Naive thymus-derived CD4-positive, alpha-beta T cell (primary cell): ENCODE measurements at regions of chr4 and their contacts with region 1.

Region 1: GRCh38 chr4:102610007-102610406 is 108.8 kb downstream of the NFKB1 start:
- DNase-seq: no peak
- ATAC-seq: no peak
- H3K4me3 ChIP-seq: no peak overlapping the region
- H3K4me3 Mint-ChIP-seq: peak overlapping the region in 1 of 10 donors; percentile 5
- H3K27ac ChIP-seq: no peak overlapping the region
- H3K27ac Mint-ChIP-seq: peak overlapping the region; percentile 10 to 97 (median 76)
- H3K4me1 ChIP-seq: peaks cover 38% of the 10 kb centered on the region in 2 donors
- H3K4me1 Mint-ChIP-seq: peaks cover 30 to 85% (median 67%) of the 10 kb centered on the region in 7 donors
- H3K27me3 ChIP-seq: no peaks in the 10 kb centered on the region
- H3K27me3 Mint-ChIP-seq: no peaks in the 10 kb centered on the region

Region 2: GRCh38 chr4:102543030-102543928 is 66.7 kb before region 1 on chr4:
- CTCF ChIA-PET with region 1: no interaction called
- POLR2A ChIA-PET with region 1: no interaction called
- intact Hi-C with region 1: loop called in 1 of 2 experiments (anchors 2 kb)
- DNase-seq: no peak
- ATAC-seq: no peak
- H3K4me3 ChIP-seq: no peak overlapping the region
- H3K4me3 Mint-ChIP-seq: no peak overlapping the region
- H3K27ac ChIP-seq: no peak overlapping the region
- H3K27ac Mint-ChIP-seq: peak overlapping the region in 3 of 9 donors; percentile 46 to 75 (median 74)
- H3K4me1 ChIP-seq: peaks cover 0 to 4% of the 10 kb centered on the region in 2 donors
- H3K4me1 Mint-ChIP-seq: peaks cover 23 to 67% (median 54%) of the 10 kb centered on the region in 7 donors
- H3K27me3 ChIP-seq: no peaks in the 10 kb centered on the region
- H3K27me3 Mint-ChIP-seq: no peaks in the 10 kb centered on the region

Region 3: DNA sequence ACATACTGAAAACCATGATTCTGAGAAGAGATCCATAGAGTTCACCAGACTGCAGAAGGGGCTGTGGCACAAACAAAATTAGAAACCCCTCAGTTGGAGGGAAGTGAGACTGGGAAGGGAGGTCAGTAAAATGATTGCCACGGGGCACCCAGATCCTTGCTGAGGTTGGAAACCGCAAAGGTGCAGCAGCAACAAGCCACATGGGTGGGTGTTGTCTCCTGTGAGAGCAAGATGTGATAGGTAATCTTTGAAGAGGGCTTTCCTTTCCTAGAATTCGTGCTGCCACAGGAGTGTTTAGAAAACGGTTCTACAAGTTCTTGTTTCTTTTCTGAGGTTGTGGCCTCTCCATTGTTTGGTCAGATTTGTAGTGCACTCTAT is 23.4 kb before region 1 on chr4:
- CTCF ChIA-PET with region 1: interaction called, 3 read pairs
- POLR2A ChIA-PET with region 1: interaction called, 3 read pairs
- intact Hi-C with region 1: loop called in 1 of 2 experiments (anchors 2 kb)
- DNase-seq: peak in 7 of 9 donors; percentile 10 to 56 (median 37)
- ATAC-seq: peak; percentile 74
- H3K4me3 ChIP-seq: peak overlapping the region; percentile 3
- H3K4me3 Mint-ChIP-seq: peak overlapping the region; percentile 25 to 78 (median 62)
- H3K27ac ChIP-seq: peak overlapping the region; percentile 58
- H3K27ac Mint-ChIP-seq: peak overlapping the region; percentile 68 to 93 (median 84)
- H3K4me1 ChIP-seq: peaks cover 48 to 61% of the 10 kb centered on the region in 2 donors
- H3K4me1 Mint-ChIP-seq: peaks cover 39 to 91% (median 84%) of the 10 kb centered on the region in 7 donors
- H3K27me3 ChIP-seq: no peaks in the 10 kb centered on the region
- H3K27me3 Mint-ChIP-seq: no peaks in the 10 kb centered on the region

Region 4: GRCh38 chr4:102620697-102621497 is 10.9 kb after region 1 on chr4:
- CTCF ChIA-PET with region 1: interaction called, 10 read pairs
- POLR2A ChIA-PET with region 1: interaction called, 3 read pairs
- intact Hi-C with region 1: loop called in 1 of 2 experiments (anchors 1 kb)
- DNase-seq: peak in 2 of 9 donors; percentile 34 to 45
- ATAC-seq: peak; percentile 65
- H3K4me3 ChIP-seq: no peak overlapping the region
- H3K4me3 Mint-ChIP-seq: peak overlapping the region in 3 of 10 donors; percentile 9 to 42 (median 32)
- H3K27ac ChIP-seq: no peak overlapping the region
- H3K27ac Mint-ChIP-seq: peak overlapping the region in 7 of 9 donors; percentile 20 to 85 (median 59)
- H3K4me1 ChIP-seq: peaks cover 7 to 18% of the 10 kb centered on the region in 2 donors
- H3K4me1 Mint-ChIP-seq: peaks cover 15 to 73% (median 46%) of the 10 kb centered on the region in 7 donors
- H3K27me3 ChIP-seq: no peaks in the 10 kb centered on the region
- H3K27me3 Mint-ChIP-seq: no peaks in the 10 kb centered on the region

Region 5: DNA sequence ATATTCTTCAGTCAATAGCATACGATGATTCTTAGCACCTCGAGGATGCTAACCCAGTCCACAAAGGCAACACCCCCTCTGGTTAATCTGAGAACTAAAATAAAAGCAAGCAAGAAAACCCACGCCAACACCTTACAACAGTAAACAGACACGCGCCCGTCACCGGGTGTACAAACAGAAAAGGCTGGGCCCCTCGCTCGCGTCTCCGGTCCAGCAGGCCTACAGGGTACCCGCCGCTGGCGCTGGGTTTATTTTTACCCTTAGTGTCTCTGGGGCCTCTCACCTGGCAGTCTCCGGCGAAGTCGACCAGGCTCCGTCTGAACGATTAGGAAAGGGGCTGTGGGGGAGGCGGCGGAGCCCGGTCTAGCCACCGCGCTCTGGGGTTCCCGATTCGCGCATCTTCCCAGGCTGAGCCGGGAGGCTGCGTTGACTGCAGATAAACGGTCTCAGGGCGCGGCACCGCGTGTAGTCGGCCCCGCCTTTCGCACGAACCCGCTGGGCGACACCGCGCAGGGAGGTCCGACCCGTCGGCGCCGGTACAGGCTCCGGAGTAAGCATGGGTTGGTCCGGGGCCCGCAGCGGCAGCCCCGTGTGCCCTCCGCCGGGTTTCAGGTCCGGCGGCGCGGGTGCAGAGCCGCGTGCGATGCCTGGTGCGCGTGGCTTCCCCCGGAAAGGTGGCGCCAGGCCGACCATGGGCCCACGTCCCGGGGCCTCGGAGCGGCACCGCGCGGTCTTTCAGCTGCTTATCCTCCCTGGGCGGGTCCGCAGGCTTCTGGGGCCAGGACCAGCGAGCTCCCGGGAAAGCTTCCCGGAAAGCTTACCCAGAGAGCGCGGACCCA is 466.1 kb after region 1 on chr4:
- CTCF ChIA-PET with region 1: no interaction called
- POLR2A ChIA-PET with region 1: interaction called, 4 read pairs
- intact Hi-C with region 1: loop called in 1 of 2 experiments (anchors 5 kb)
- DNase-seq: peak; percentile 53 to 75 (median 68)
- ATAC-seq: peak; percentile 83
- H3K4me3 ChIP-seq: peak overlapping the region; percentile 74
- H3K4me3 Mint-ChIP-seq: peak overlapping the region; percentile 77 to 97 (median 95)
- H3K27ac ChIP-seq: peak overlapping the region; percentile 87
- H3K27ac Mint-ChIP-seq: peak overlapping the region; percentile 86 to 99 (median 97)
- H3K4me1 ChIP-seq: peaks cover 10 to 17% of the 10 kb centered on the region in 2 donors
- H3K4me1 Mint-ChIP-seq: peaks cover 23 to 54% (median 47%) of the 10 kb centered on the region in 7 donors
- H3K27me3 ChIP-seq: no peaks in the 10 kb centered on the region
- H3K27me3 Mint-ChIP-seq: no peaks in the 10 kb centered on the region